ENCODE measurements at regions of chr21 and their contacts with region 1.

Region 1: DNA sequence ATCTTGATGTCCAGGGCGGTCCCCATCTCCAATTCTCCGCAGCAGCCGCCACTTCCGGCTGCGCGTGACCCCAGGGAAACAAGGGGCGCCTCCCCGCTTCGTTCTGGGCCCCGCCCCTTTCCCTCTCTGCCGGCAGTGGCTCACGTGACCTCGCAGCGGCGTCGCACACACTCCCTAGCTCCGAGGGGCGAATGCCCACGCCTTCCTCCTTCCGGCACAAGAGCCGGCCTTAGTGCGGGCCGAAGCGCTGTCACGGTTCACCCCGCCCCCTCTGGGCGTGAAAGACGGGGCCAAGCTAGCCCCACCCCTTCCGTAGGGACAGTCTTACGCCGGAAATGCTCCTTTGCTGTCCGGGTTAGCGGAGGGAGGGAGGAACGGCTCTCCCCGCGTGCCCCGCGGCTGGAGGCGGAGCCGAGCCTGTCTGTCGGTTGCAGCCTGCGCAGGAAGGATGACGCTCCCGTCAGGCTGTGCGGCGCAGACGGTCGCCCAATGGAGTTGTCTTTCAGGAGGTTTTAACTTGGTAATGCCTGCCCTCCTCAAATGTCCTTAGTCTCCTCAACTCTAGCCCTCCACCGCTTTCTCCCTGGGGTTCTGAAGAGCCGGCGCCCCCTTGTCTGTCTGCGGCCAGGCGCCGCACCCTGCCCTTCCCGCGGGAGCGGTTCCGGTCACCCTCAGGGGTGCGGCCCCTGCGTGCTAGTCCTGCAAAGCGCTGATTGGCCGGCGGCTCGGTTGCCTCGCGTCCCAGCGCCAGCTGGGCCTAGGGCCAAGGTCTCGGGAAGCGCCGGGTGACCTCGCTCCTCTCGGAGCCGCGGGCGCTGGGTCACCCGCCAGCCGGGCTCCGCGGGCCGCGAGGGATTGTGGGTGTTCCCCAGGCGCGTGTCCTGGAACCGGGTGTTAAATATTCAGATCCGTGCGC is at the start of gene VPS26C:
- DNase-seq: peak; percentile 99
- ATAC-seq: peak; percentile 97
- total RNA-seq, gene VPS26C: 49.7 TPM

Region 2: DNA sequence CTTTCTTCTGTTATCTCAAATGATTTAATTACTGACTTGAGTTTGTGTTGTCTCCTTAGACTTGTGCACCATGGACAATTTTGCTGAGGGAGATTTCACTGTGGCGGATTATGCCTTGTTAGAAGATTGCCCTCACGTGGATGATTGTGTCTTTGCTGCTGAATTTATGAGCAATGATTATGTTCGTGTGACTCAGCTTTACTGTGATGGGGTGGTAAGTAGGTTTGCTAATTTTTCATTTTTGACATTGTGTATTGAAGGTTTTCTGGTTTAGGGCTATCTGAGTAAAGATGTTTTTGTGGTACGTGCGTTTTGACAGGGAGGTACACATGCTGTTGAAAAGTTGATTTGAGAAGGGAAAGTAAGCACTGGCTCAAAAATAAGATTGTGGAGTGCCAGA is 180.3 kb before region 1 on chr21:
- intact Hi-C with region 1: no loop called
- DNase-seq: no peak
- ATAC-seq: no peak

Region 3: DNA sequence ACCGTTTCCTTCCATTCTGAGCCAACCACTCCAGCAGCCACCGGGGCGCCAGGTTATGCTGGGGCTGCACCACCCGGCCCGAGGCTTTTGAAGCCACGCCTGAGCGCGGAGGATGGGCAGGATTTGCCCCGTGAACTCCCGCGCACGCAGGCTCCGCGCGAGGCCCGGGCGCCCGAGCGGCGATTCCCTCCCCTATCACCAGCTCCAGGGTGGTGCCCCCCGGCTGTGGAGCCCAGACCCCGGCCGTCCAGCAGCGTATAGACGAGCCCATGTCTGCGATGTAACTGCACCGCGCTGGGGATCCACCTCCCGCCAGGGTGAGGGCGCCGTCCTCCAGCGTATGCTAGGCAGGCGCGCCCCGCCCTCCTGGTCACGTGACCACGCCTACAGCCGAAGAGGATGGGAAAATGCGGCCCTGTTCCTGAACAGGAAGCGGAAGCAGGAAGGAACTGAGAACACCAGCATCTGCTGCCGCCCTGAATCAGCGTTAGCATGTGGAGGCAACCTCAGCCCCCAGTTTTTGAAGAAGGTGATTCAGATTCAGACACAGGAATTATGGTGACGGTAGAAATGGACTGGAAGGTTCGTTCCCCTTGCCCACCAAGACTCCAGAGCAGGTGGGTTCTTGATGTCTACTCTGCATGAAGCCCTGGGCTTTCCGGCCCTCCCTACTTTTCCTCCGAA is 46.4 kb before region 1 on chr21:
- intact Hi-C with region 1: loop called (anchors 1 kb)
- DNase-seq: peak; percentile 99
- ATAC-seq: peak; percentile 96

Region 4: DNA sequence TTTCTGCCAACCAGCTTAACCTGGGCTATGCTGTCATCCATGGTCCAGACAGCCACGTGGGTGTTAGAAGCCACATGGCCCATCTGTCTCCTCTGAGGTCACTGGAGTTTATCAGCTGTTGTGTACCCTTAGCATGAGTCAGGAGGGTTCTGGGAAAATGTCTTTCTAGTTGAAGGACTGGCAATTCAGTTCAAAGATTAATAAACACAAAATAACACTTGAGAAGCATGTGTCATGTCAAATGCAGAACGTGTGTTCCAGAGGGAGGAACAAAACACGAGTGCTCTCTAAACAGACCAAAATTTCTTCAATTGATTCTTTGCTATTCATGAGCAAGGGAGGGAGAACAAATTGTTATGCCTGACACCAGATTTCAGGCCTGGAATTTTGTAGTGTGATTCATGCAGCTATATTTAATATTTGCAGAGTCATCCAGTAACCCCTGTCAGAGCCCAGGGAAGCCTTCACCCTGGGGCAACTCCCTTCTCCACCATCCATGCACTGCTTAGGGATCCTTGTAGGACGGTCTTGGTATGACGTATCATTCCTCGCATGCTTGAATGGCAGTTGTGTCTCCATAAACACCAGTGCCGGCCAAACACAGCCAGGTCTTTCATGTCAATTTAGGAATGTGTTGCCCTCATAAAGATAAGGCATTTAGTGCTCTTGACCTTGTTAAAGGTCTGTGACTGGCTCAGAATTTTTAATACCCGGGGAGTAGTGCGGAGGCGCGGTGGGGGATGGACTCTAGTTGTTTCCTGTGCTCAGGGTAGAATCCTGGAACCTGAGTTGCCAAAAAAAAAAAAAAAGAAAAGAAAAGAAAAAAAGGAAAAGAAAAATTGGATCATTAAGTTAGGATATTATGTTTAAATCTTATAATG is 71.4 kb after region 1 on chr21:
- intact Hi-C with region 1: loop called (anchors 2 kb)
- DNase-seq: peak; percentile 60
- ATAC-seq: peak; percentile 93

Measured in Right ventricle myocardium inferior (tissue), 1 donor.